ENCODE measurements at regions of chr15 and their contacts with region 1.

Region 1: DNA sequence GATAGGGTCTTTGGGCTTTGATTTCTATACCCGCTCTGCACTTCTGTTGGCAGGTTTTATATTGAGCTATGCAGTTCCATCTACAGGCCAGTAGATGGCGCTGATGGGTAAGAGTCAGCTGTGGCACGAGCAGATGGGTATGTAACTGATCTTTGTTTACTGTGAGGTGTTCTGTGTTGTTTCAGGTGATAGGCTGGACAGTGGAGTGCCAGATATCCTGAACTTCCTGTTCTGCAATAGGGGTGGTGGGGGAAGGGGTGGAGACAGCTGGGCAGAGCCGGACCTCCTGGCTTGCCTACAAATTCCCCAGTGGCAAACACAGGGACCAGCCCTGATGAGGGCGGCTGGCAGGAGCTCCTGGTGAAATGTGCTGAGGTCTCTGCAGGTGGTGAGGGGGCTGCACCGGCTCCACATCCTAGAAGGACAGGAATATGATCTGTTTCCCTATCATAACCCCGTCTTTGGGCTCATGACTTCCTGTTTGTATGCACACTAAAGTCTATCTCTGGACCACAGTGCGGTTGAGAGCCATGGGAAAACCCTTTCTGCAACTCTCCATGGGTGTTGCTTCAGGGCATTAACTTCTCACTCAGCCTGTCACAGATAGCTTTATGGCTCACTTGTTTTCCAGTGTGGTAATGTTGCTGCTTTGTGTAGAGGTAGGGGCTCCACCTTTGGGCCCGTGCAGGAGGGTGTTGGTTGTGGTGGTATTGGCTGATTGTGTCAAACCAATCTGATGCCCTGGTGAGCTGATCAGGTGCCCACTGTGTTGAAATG is 13.4 kb upstream of the FAM98B start:
- DNase-seq: peak; percentile 71
- H3K4me3 Mint-ChIP-seq: no peak overlapping the region
- H3K27ac Mint-ChIP-seq: no peak overlapping the region
- H3K4me1 Mint-ChIP-seq: peaks cover 6% of the 10 kb centered on the region
- H3K27me3 Mint-ChIP-seq: peaks cover 47% of the 10 kb centered on the region
- CTCF ChIP-seq: peak; percentile 89

Region 2: DNA sequence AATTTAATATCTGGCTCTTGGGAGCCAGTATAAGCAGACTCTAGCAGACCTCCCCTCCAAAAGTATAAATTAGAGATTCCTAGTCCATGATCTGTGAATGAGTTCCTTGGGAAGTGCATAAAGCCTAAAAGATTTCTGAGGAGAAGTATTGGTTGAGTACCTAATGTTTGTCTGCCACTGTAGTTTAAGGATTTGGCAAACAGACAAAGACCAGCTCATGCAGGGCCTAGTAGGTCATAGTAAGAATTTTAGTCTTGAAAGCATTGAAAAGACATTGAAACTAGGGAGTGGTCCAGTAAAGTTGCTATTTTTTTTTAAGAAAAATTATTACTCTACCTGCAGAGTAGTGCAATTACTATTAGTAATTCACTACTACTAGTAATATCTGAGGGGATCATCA is 120.4 kb before region 1 on chr15:
- CTCF ChIA-PET with region 1: no interaction called
- POLR2A ChIA-PET with region 1: no interaction called
- intact Hi-C with region 1: no loop called
- DNase-seq: no peak
- H3K4me3 Mint-ChIP-seq: no peak overlapping the region
- H3K27ac Mint-ChIP-seq: no peak overlapping the region
- H3K4me1 Mint-ChIP-seq: peaks cover 7% of the 10 kb centered on the region
- H3K27me3 Mint-ChIP-seq: no peaks in the 10 kb centered on the region
- CTCF ChIP-seq: no peak

Region 3: GRCh38 chr15:38424101-38424552 is 16.4 kb before region 1 on chr15:
- CTCF ChIA-PET with region 1: interaction called, 36 read pairs
- POLR2A ChIA-PET with region 1: no interaction called
- intact Hi-C with region 1: no loop called
- DNase-seq: no peak
- H3K4me3 Mint-ChIP-seq: no peak overlapping the region
- H3K27ac Mint-ChIP-seq: no peak overlapping the region
- H3K4me1 Mint-ChIP-seq: no peaks in the 10 kb centered on the region
- H3K27me3 Mint-ChIP-seq: no peaks in the 10 kb centered on the region
- CTCF ChIP-seq: no peak

Region 4: GRCh38 chr15:38474155-38474757 is 33.7 kb after region 1 on chr15:
- CTCF ChIA-PET with region 1: interaction called, 13 read pairs
- POLR2A ChIA-PET with region 1: no interaction called
- intact Hi-C with region 1: loop called (anchors 1 kb)
- DNase-seq: peak; percentile 61
- H3K4me3 Mint-ChIP-seq: no peak overlapping the region
- H3K27ac Mint-ChIP-seq: no peak overlapping the region
- H3K4me1 Mint-ChIP-seq: peaks cover 6% of the 10 kb centered on the region
- H3K27me3 Mint-ChIP-seq: no peaks in the 10 kb centered on the region
- CTCF ChIP-seq: peak; percentile 63

Region 5: GRCh38 chr15:38610748-38611147 is 170.2 kb after region 1 on chr15:
- CTCF ChIA-PET with region 1: interaction called, 13 read pairs
- POLR2A ChIA-PET with region 1: no interaction called
- intact Hi-C with region 1: no loop called
- DNase-seq: no peak
- H3K4me3 Mint-ChIP-seq: no peak overlapping the region
- H3K27ac Mint-ChIP-seq: no peak overlapping the region
- H3K4me1 Mint-ChIP-seq: no peaks in the 10 kb centered on the region
- H3K27me3 Mint-ChIP-seq: peaks cover 24% of the 10 kb centered on the region
- CTCF ChIP-seq: no peak

Region 6: DNA sequence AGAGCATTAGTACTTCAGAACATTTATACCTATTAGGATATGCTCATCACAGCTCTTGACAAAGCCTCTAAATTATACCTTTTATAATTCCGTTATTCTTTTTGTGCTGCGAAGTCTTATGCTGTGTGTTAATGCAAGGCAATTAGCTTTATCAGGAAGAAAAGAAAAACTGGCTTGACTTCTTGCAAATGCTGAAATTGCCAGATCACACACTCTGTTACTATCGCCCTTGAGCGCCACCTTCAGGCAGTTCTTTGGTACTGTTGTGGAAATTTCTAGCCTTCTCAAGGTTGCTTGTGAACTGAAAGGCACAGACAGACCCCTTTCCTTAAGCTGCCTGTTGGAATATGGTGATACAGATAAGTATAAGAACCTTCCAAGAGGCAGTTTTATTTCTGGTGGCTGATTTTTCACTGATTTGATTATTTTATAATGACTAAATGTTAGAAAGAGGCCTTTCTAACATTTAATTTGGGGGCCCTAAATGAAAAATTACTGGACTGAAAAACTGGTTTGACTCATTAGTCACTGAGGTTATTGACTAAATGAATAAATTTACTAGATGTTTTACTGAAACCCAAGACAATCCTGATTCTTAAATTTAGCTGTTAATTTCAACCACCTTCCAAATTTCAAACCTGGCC is 250.3 kb after region 1 on chr15:
- CTCF ChIA-PET with region 1: interaction called, 78 read pairs
- POLR2A ChIA-PET with region 1: no interaction called
- intact Hi-C with region 1: no loop called
- DNase-seq: peak; percentile 81
- H3K4me3 Mint-ChIP-seq: no peak overlapping the region
- H3K27ac Mint-ChIP-seq: no peak overlapping the region
- H3K4me1 Mint-ChIP-seq: peaks cover 6% of the 10 kb centered on the region
- H3K27me3 Mint-ChIP-seq: no peaks in the 10 kb centered on the region
- CTCF ChIP-seq: peak; percentile 78